Body of pancreas (tissue), 4 donors: ENCODE measurements at regions of chr14 and their contacts with region 1.

Region 1: DNA sequence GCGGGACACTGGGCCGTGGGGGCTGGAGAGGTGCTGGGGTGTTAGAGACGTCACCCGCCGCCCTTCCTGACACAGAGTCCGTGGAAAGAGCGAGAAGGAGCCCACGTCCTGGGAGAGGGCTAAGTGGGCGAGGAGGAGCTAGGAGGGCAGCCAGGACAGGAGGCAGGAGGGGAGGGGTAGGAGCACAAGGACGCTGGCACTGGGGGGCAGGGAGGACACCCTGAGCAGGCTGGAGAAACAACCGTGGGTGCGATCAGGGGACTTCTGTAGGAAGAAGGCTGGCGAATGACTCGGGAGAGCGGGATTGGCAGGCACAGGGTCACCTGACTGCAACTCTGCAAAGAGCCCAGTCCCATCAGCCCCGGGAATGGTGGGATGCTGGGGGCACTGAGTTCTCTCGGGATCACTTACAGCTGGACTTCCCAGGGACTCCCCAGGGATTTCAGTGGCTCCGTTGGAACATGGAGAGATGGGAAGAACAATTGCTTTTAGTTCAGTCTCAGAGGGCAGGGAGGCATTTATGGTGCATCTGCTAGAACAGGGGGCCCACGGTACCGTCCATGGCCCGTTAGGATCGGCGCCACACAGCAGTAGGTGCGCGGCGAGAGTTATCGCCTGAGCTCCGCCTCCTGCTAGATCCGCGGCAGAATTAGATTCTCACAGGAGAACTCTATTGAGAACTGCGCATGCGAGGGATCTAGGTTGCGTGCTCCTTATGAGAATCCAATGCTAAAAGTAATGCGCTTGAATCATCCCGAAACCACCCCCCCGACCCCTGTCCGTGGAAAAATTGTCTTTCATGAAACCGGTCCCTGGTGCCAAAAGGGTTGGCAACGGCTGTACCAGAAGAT is 24.3 kb downstream of the UBR7 start:
- DNase-seq: peak in 3 of 4 donors; percentile 11 to 29 (median 25)
- ATAC-seq: peak; percentile 57
- H3K4me3 ChIP-seq: no peak overlapping the region
- H3K27ac ChIP-seq: no peak overlapping the region
- H3K4me1 ChIP-seq: peaks cover 20% of the 10 kb centered on the region
- H3K27me3 ChIP-seq: no peaks in the 10 kb centered on the region
- CTCF ChIP-seq: no peak
- POLR2A ChIP-seq: no peak

Region 2: GRCh38 chr14:93629643-93630042 is 398.3 kb after region 1 on chr14:
- intact Hi-C with region 1: loop called (anchors 10 kb)
- DNase-seq: no peak
- ATAC-seq: no peak
- H3K4me3 ChIP-seq: no peak overlapping the region
- H3K27ac ChIP-seq: no peak overlapping the region
- H3K4me1 ChIP-seq: no peaks in the 10 kb centered on the region
- H3K27me3 ChIP-seq: no peaks in the 10 kb centered on the region
- CTCF ChIP-seq: no peak
- POLR2A ChIP-seq: no peak